ENCODE measurements at regions of chr19 and their contacts with region 1.

Region 1: GRCh38 chr19:15379083-15379995 is at the start of gene AKAP8:
- DNase-seq: peak; percentile 93 to 99 (median 98)
- ATAC-seq: peak; percentile 96
- H3K4me3 ChIP-seq: peak within 1 kb of the TSS; percentile 98
- H3K4me3 Mint-ChIP-seq: peak within 1 kb of the TSS; percentile 93 to 100 (median 99)
- H3K27ac ChIP-seq: peak within 1 kb of the TSS; percentile 97
- H3K27ac Mint-ChIP-seq: peak within 1 kb of the TSS; percentile 97 to 100 (median 100)
- H3K4me1 ChIP-seq: peaks cover 24 to 28% of the 10 kb centered on the region in 2 donors
- H3K4me1 Mint-ChIP-seq: peaks cover 13 to 46% (median 35%) of the 10 kb centered on the region in 7 donors
- H3K27me3 ChIP-seq: no peaks in the 10 kb centered on the region
- H3K27me3 Mint-ChIP-seq: no peaks in the 10 kb centered on the region
- total RNA-seq, gene AKAP8: 60.0 to 81.2 (median 80.2) TPM

Region 2: GRCh38 chr19:15125232-15126067 is 253.9 kb before region 1 on chr19:
- CTCF ChIA-PET with region 1: no interaction called
- POLR2A ChIA-PET with region 1: interaction called, 4 read pairs
- intact Hi-C with region 1: loop called (anchors 1 kb)
- DNase-seq: peak; percentile 94 to 98 (median 96)
- ATAC-seq: peak; percentile 93
- H3K4me3 ChIP-seq: peak overlapping the region; percentile 90
- H3K4me3 Mint-ChIP-seq: peak overlapping the region; percentile 89 to 100 (median 98)
- H3K27ac ChIP-seq: peak overlapping the region; percentile 92
- H3K27ac Mint-ChIP-seq: peak overlapping the region; percentile 91 to 100 (median 97)
- H3K4me1 ChIP-seq: peaks cover 0 to 25% of the 10 kb centered on the region in 2 donors
- H3K4me1 Mint-ChIP-seq: peaks cover 27 to 59% (median 44%) of the 10 kb centered on the region in 7 donors
- H3K27me3 ChIP-seq: no peaks in the 10 kb centered on the region
- H3K27me3 Mint-ChIP-seq: peaks cover 0 to 2% (median 0%) of the 10 kb centered on the region in 5 donors

Region 3: DNA sequence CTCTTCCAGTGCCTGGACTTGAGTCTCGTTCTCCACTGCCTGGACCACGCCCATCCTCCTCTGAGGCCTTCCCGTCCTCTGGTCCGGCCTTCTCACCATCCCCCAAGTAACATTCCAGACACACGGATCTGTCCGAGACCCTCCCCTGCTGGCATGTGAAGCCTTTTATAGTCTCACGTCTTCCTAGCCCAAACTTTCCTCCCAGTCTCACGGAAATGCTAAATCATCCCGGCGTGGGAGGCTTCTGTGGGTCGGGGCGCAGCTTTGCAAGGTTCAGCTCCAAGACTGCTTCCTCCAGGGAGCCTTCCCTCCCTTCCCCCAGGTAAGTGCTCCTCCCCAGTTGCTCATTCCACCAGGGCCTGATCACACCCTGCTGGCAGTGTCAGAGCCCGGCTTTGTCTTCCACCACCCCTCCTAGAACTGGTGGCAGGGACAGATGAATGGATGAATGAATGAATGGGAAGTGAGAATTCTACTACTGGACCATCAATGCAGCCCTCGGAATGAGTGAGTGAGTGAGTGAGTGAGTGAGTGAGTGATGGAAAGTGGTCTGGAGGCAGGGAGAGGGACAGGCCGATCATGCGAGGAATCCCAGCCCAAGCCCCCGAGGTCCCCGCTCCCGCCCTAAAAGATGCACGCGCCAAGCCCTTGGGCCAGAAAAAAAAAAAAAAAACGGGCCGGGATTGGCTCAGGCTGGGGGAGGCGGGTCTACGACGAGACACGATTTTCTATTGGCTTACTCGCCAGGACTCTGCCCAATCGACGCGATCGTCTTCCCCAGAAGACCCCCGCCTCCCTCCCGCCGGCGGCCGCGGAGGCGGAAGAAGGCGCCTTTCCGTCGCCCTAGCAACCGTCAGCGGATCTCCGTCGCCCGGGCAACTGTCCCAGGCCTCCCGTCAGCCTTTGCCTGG is 156.3 kb before region 1 on chr19:
- CTCF ChIA-PET with region 1: no interaction called
- POLR2A ChIA-PET with region 1: interaction called, 3 read pairs
- intact Hi-C with region 1: loop called in 1 of 2 experiments (anchors 2 kb)
- DNase-seq: peak; percentile 53 to 80 (median 66)
- ATAC-seq: peak; percentile 98
- H3K4me3 ChIP-seq: peak overlapping the region; percentile 48
- H3K4me3 Mint-ChIP-seq: peak overlapping the region; percentile 67 to 84 (median 81)
- H3K27ac ChIP-seq: peak overlapping the region; percentile 8
- H3K27ac Mint-ChIP-seq: peak overlapping the region in 6 of 9 donors; percentile 13 to 67 (median 24)
- H3K4me1 ChIP-seq: peaks cover 0 to 14% of the 10 kb centered on the region in 2 donors
- H3K4me1 Mint-ChIP-seq: peaks cover 10 to 22% (median 15%) of the 10 kb centered on the region in 7 donors
- H3K27me3 ChIP-seq: peaks cover 3 to 11% of the 10 kb centered on the region in 2 donors
- H3K27me3 Mint-ChIP-seq: peaks cover 12 to 37% (median 24%) of the 10 kb centered on the region in 5 donors

Region 4: GRCh38 chr19:15332311-15332996 is 46.9 kb before region 1 on chr19 and contains the start of gene BRD4:
- CTCF ChIA-PET with region 1: no interaction called
- POLR2A ChIA-PET with region 1: interaction called, 35 read pairs
- intact Hi-C with region 1: loop called (anchors 1 to 2 kb)
- DNase-seq: peak; percentile 67 to 90 (median 81)
- ATAC-seq: peak; percentile 82
- H3K4me3 ChIP-seq: peak within 1 kb of the TSS; percentile 91
- H3K4me3 Mint-ChIP-seq: peak within 1 kb of the TSS; percentile 93 to 99 (median 96)
- H3K27ac ChIP-seq: peak within 1 kb of the TSS; percentile 91
- H3K27ac Mint-ChIP-seq: peak within 1 kb of the TSS; percentile 85 to 96 (median 94)
- H3K4me1 ChIP-seq: peaks cover 28 to 29% of the 10 kb centered on the region in 2 donors
- H3K4me1 Mint-ChIP-seq: peaks cover 32 to 52% (median 47%) of the 10 kb centered on the region in 7 donors
- H3K27me3 ChIP-seq: no peaks in the 10 kb centered on the region
- H3K27me3 Mint-ChIP-seq: no peaks in the 10 kb centered on the region
- total RNA-seq, gene BRD4: 104 to 168 (median 128) TPM

Region 5: DNA sequence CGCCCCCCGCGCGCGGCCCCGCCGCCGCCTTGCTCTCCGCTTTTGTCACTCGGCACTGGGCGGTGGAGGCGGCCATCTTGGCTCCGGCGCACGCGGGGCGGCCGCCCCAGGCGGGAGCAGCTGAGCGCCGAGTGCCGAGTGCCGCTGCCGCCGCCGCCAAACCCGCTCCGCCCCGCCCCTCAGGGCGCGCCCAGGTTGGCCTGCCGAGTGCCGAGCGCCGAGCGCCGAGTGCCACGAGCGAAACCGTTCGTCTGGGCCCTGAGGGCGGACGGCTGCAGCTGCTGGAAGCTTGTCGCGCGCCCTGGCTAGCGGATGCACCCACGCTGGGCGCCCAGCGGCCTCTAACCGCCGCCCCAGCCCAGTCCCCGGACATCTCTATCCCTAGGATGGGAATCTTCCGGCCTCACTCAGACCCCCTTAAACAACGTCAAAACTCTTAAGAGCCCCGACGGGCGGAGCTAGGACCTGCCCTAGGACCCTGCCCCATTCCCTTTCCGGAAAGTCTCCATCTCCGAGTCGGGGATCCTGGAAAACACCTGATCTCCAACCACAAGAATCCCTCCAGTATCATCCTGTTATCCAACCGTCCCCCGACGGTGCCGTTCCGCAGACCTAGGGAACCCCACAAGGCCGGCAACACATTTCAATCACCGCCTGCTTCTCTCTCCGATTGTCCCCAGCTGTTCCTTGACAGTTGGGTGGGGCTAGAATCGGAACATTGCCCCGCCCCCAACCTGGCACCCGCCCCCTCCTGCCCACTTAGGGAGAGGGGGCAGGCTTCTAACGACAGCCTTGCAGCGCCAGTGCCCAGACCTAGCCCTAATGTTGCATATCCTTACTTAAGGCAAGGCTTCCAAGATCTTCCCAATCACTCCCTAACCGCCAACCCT is 53.5 kb after region 1 on chr19:
- CTCF ChIA-PET with region 1: interaction called, 4 read pairs
- POLR2A ChIA-PET with region 1: interaction called, 9 read pairs
- intact Hi-C with region 1: loop called (anchors 1 kb)
- DNase-seq: peak; percentile 87 to 95 (median 92)
- ATAC-seq: peak; percentile 99
- H3K4me3 ChIP-seq: peak overlapping the region; percentile 96
- H3K4me3 Mint-ChIP-seq: peak overlapping the region; percentile 86 to 99 (median 97)
- H3K27ac ChIP-seq: peak overlapping the region; percentile 90
- H3K27ac Mint-ChIP-seq: peak overlapping the region; percentile 85 to 98 (median 94)
- H3K4me1 ChIP-seq: peaks cover 15 to 26% of the 10 kb centered on the region in 2 donors
- H3K4me1 Mint-ChIP-seq: peaks cover 24 to 32% (median 29%) of the 10 kb centered on the region in 7 donors
- H3K27me3 ChIP-seq: no peaks in the 10 kb centered on the region
- H3K27me3 Mint-ChIP-seq: peaks cover 0 to 2% (median 0%) of the 10 kb centered on the region in 5 donors

Region 6: GRCh38 chr19:15498911-15499317 is 119.6 kb after region 1 on chr19:
- CTCF ChIA-PET with region 1: no interaction called
- POLR2A ChIA-PET with region 1: no interaction called
- intact Hi-C with region 1: no loop called
- DNase-seq: no peak
- ATAC-seq: no peak
- H3K4me3 ChIP-seq: no peak overlapping the region
- H3K4me3 Mint-ChIP-seq: peak overlapping the region in 1 of 10 donors; percentile 41
- H3K27ac ChIP-seq: no peak overlapping the region
- H3K27ac Mint-ChIP-seq: peak overlapping the region in 2 of 9 donors; percentile 6 to 9
- H3K4me1 ChIP-seq: peaks cover 0 to 6% of the 10 kb centered on the region in 2 donors
- H3K4me1 Mint-ChIP-seq: peaks cover 7 to 37% (median 23%) of the 10 kb centered on the region in 7 donors
- H3K27me3 ChIP-seq: no peaks in the 10 kb centered on the region
- H3K27me3 Mint-ChIP-seq: peaks cover 0 to 32% (median 0%) of the 10 kb centered on the region in 5 donors

Region 7: DNA sequence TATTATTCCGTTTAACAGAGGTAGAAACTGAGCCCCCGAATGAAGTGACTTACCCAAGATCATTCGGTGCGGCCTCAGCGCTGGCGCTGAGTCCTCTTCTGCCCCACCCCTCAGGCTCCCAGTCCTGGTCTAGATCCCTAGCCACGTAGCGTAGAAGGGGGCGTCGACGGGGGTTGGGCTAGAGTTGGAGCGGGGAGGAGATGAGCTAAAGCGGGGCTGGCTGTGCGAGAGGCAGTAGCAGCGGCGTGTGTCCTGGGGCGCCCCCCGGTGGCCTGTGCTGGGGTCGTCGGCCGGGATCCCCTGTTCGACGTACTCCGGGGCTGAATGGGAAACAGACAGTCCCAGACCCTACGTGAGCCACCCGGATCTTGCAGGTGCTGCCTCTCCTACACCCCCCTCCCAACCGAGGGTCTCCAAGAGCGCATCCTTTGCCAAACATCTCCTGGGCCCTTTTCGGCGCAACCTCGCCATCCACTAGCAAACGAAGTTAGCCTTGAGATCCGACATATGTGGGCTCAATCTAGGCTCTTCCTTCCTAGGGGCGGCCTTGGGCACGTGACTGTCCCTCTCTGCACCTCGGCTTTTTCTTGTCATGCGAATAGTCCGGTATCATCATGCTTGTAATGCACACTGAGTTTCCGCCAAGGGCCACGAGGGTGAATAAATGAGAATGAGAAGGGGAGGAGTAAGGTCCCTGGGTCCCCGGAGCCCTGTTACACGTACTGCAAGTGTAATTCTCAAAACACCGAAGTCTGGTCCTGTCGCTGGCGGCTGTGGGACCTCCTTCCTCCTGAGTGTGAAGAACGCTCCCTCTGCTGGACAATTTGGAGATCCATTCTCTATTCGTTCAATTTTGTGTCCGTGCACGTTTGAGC is 176.7 kb after region 1 on chr19:
- CTCF ChIA-PET with region 1: interaction called, 5 read pairs
- POLR2A ChIA-PET with region 1: interaction called, 16 read pairs
- intact Hi-C with region 1: loop called (anchors 1 kb)
- DNase-seq: peak; percentile 89 to 98 (median 94)
- ATAC-seq: peak; percentile 93
- H3K4me3 ChIP-seq: peak overlapping the region; percentile 62
- H3K4me3 Mint-ChIP-seq: peak overlapping the region; percentile 79 to 96 (median 86)
- H3K27ac ChIP-seq: peak overlapping the region; percentile 67
- H3K27ac Mint-ChIP-seq: peak overlapping the region; percentile 65 to 94 (median 91)
- H3K4me1 ChIP-seq: peaks cover 5 to 8% of the 10 kb centered on the region in 2 donors
- H3K4me1 Mint-ChIP-seq: peaks cover 21 to 37% (median 27%) of the 10 kb centered on the region in 7 donors
- H3K27me3 ChIP-seq: no peaks in the 10 kb centered on the region
- H3K27me3 Mint-ChIP-seq: peaks cover 0 to 8% (median 0%) of the 10 kb centered on the region in 5 donors

Region 8: GRCh38 chr19:16495982-16496612 is 1116.8 kb after region 1 on chr19 and contains the starts of genes C19orf44 and CALR3:
- CTCF ChIA-PET with region 1: no interaction called
- POLR2A ChIA-PET with region 1: no interaction called
- intact Hi-C with region 1: loop called in 1 of 2 experiments (anchors 1 kb)
- DNase-seq: peak; percentile 84 to 97 (median 96)
- ATAC-seq: peak; percentile 99
- H3K4me3 ChIP-seq: peak within 1 kb of the TSS; percentile 90
- H3K4me3 Mint-ChIP-seq: peak within 1 kb of the TSS; percentile 86 to 98 (median 94)
- H3K27ac ChIP-seq: peak within 1 kb of the TSS; percentile 72
- H3K27ac Mint-ChIP-seq: peak within 1 kb of the TSS; percentile 74 to 98 (median 87)
- H3K4me1 ChIP-seq: peaks cover 0 to 4% of the 10 kb centered on the region in 2 donors
- H3K4me1 Mint-ChIP-seq: peaks cover 10 to 23% (median 19%) of the 10 kb centered on the region in 7 donors
- H3K27me3 ChIP-seq: no peaks in the 10 kb centered on the region
- H3K27me3 Mint-ChIP-seq: no peaks in the 10 kb centered on the region
- total RNA-seq, gene C19orf44: 1.5 to 6.0 (median 3.4) TPM
- total RNA-seq, gene CALR3: not detected